ENCODE measurements at regions of chr1 and their contacts with region 1.

Region 1: GRCh38 chr1:164914208-164914607 is 355.2 kb downstream of the PBX1 start:
- DNase-seq: no peak
- ATAC-seq: peak; percentile 66 to 88 (median 76)
- H3K4me3 ChIP-seq: no peak overlapping the region
- H3K27ac ChIP-seq: no peak overlapping the region
- H3K4me1 ChIP-seq: peaks cover 0 to 10% (median 0%) of the 10 kb centered on the region in 9 donors
- H3K27me3 ChIP-seq: no peaks in the 10 kb centered on the region
- CTCF ChIP-seq: peak in 8 of 9 donors; percentile 21 to 58 (median 43)

Region 2: DNA sequence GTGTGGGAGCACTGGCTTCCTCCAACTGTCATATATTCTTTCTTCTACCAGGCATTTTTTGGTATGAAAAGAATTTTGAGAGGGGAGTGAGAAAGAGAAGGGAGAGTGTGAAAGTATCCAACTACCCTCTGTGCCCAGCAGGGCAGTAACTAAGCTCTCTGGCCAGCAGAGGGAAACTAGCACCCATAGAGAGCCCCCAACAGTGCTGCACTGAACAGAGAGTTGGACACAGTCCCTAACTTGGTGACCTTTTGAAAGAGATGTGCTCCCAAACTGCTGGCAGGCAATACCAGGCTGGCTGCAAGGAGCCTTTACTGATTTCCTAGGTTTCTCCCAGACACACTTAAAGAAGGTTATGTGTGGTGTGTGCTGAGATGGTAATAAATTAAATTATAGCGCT is 474.0 kb before region 1 on chr1:
- intact Hi-C with region 1: loop called in 3 of 10 experiments (anchors 5 to 10 kb)
- DNase-seq: peak in 1 of 2 donors; percentile 56
- ATAC-seq: peak; percentile 88 to 100 (median 98)
- H3K4me3 ChIP-seq: no peak overlapping the region
- H3K27ac ChIP-seq: peak overlapping the region in 1 of 10 donors; percentile 3
- H3K4me1 ChIP-seq: peaks cover 0 to 20% (median 3%) of the 10 kb centered on the region in 9 donors
- H3K27me3 ChIP-seq: no peaks in the 10 kb centered on the region
- CTCF ChIP-seq: peak in 8 of 9 donors; percentile 44 to 70 (median 56)

Region 3: GRCh38 chr1:164625001-164625617 is 289.1 kb before region 1 on chr1:
- intact Hi-C with region 1: loop called in 1 of 10 experiments (anchors 10 kb)
- DNase-seq: no peak
- ATAC-seq: no peak
- H3K4me3 ChIP-seq: no peak overlapping the region
- H3K27ac ChIP-seq: peak overlapping the region in 1 of 10 donors; percentile 17
- H3K4me1 ChIP-seq: peaks cover 4 to 65% (median 41%) of the 10 kb centered on the region in 9 donors
- H3K27me3 ChIP-seq: no peaks in the 10 kb centered on the region
- CTCF ChIP-seq: peak in 4 of 9 donors; percentile 17 to 34 (median 22)

Region 4: GRCh38 chr1:164748253-164748899 is 165.8 kb before region 1 on chr1:
- intact Hi-C with region 1: no loop called
- DNase-seq: peak; percentile 33 to 58
- ATAC-seq: peak; percentile 62 to 97 (median 85)
- H3K4me3 ChIP-seq: no peak overlapping the region
- H3K27ac ChIP-seq: peak overlapping the region in 9 of 10 donors; percentile 30 to 74 (median 63)
- H3K4me1 ChIP-seq: peaks cover 6 to 65% (median 42%) of the 10 kb centered on the region in 9 donors
- H3K27me3 ChIP-seq: no peaks in the 10 kb centered on the region
- CTCF ChIP-seq: no peak

Region 5: GRCh38 chr1:164823486-164824279 is 90.5 kb before region 1 on chr1:
- intact Hi-C with region 1: loop called in 1 of 10 experiments (anchors 1 kb)
- DNase-seq: peak in 1 of 2 donors; percentile 38
- ATAC-seq: peak; percentile 53 to 95 (median 88)
- H3K4me3 ChIP-seq: no peak overlapping the region
- H3K27ac ChIP-seq: peak overlapping the region in 9 of 10 donors; percentile 32 to 84 (median 70)
- H3K4me1 ChIP-seq: peaks cover 0 to 31% (median 16%) of the 10 kb centered on the region in 9 donors
- H3K27me3 ChIP-seq: no peaks in the 10 kb centered on the region
- CTCF ChIP-seq: peak in 3 of 9 donors; percentile 24 to 27 (median 27)

Region 6: GRCh38 chr1:164836614-164837018 is 77.6 kb before region 1 on chr1:
- intact Hi-C with region 1: loop called in 1 of 10 experiments (anchors 5 kb)
- DNase-seq: peak; percentile 19 to 20
- ATAC-seq: peak; percentile 35 to 92 (median 78)
- H3K4me3 ChIP-seq: no peak overlapping the region
- H3K27ac ChIP-seq: peak overlapping the region in 9 of 10 donors; percentile 27 to 71 (median 50)
- H3K4me1 ChIP-seq: peaks cover 0 to 39% (median 14%) of the 10 kb centered on the region in 9 donors
- H3K27me3 ChIP-seq: no peaks in the 10 kb centered on the region
- CTCF ChIP-seq: no peak

Measured in heart right ventricle (tissue), 16 donors.